Caco-2 (cell line): ENCODE measurements at regions of chr10 and their contacts with region 1.

Region 1: DNA sequence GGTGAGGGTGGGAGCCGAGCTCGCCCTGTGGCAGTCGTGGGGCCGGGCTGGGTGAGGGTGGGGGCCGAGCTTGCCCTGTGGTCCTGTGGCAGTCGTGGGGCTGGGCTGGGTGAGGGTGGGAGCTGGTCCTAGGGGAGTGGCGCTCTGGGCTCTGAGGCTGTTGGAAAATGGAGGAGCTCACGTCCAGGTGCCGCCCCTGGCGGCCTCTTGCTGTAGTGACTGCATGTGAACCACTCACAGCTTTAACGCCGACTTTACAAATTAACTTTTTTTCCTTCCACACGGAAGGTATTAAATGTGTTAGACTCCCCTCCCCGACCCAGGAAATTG is 312.6 kb downstream of the WDR37 start:
- DNase-seq: peak in 1 of 2 experiments; percentile 58
- H3K4me3 ChIP-seq: no peak overlapping the region
- H3K4me3 Mint-ChIP-seq: no peak overlapping the region
- H3K27ac Mint-ChIP-seq: no peak overlapping the region
- H3K4me1 ChIP-seq: no peaks in the 10 kb centered on the region
- H3K4me1 Mint-ChIP-seq: no peaks in the 10 kb centered on the region
- H3K27me3 ChIP-seq: no peaks in the 10 kb centered on the region
- H3K27me3 Mint-ChIP-seq: peaks cover 4% of the 10 kb centered on the region
- CTCF ChIP-seq: peak; percentile 63 to 67

Region 2: DNA sequence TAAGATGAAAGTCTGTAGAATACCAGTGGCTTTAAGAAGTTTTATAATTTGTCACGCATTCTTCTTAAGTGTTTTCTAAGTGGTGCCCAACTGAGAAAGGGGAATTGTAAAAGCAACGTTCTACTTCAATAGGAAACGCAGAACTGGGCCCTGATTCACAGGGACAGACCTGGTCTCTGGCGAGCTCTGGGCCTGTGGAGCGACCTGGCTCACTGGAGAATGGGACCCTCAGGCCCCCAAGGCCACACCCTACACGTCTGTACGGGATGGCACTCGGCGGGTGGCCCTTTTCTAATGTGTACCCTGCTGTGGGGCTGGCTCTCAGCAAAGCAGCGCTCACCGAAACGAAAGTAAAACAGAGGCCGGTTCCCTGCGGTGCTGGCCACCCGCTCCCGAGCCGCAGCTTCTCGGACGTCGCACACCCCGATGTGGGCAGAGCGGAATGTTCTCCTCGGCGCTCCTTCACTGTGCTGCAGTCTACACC is 884.3 kb before region 1 on chr10:
- CTCF ChIA-PET with region 1: no interaction called
- POLR2A ChIA-PET with region 1: no interaction called
- intact Hi-C with region 1: no loop called
- DNase-seq: no peak
- H3K4me3 ChIP-seq: no peak overlapping the region
- H3K4me3 Mint-ChIP-seq: no peak overlapping the region
- H3K27ac Mint-ChIP-seq: no peak overlapping the region
- H3K4me1 ChIP-seq: no peaks in the 10 kb centered on the region
- H3K4me1 Mint-ChIP-seq: no peaks in the 10 kb centered on the region
- H3K27me3 ChIP-seq: no peaks in the 10 kb centered on the region
- H3K27me3 Mint-ChIP-seq: no peaks in the 10 kb centered on the region
- CTCF ChIP-seq: no peak

Region 3: DNA sequence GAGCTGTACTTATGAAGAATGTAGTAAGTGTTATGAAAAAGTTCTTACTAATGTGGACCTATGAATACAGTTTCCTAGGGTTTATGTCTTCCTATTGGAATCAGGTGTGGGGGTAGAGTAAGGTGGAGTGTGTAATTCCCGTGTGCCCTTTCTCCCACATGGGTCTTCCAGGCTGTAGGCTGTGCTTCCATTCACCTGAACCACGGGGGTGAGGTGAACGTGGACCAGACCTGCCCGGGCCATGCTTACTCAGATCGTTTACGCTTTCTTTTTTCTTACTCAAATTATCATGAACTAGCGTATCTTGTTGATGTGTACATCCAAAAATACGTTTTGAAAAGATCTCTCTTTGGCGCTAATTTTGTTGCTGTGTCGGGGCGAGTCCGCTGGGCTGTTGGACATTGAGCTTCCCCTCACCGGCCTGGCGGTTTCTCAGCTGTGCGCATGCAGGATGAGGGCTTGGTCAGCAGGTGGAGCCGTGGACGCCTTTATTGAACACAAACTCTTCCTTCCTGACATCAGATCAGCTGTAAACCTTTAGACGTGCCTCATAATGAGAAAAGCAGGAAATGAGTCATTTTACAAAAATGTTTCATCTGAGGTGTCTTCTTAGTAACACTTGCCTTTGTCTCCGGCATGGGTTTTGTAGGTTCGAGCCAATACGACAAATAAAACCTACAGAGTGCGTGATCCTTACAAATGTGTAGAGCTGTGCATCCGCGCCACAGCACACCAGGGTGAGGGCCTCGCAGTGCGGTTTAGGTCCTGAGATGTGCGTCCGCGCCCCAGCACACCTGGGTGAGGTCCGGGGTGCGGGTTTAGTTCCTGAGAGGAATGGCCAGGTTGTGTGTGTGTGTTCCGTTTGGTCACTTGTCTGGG is 258.8 kb before region 1 on chr10:
- CTCF ChIA-PET with region 1: interaction called, 18 read pairs
- POLR2A ChIA-PET with region 1: no interaction called
- intact Hi-C with region 1: no loop called
- DNase-seq: peak; percentile 77 to 83
- H3K4me3 ChIP-seq: no peak overlapping the region
- H3K4me3 Mint-ChIP-seq: no peak overlapping the region
- H3K27ac Mint-ChIP-seq: peak overlapping the region; percentile 67
- H3K4me1 ChIP-seq: no peaks in the 10 kb centered on the region
- H3K4me1 Mint-ChIP-seq: peaks cover 19% of the 10 kb centered on the region
- H3K27me3 ChIP-seq: no peaks in the 10 kb centered on the region
- H3K27me3 Mint-ChIP-seq: no peaks in the 10 kb centered on the region
- CTCF ChIP-seq: peak; percentile 84 to 85

Region 4: GRCh38 chr10:1142596-1142995 is 226.2 kb before region 1 on chr10:
- CTCF ChIA-PET with region 1: no interaction called
- POLR2A ChIA-PET with region 1: no interaction called
- intact Hi-C with region 1: loop called (anchors 5 kb)
- DNase-seq: peak in 1 of 2 experiments; percentile 45
- H3K4me3 ChIP-seq: no peak overlapping the region
- H3K4me3 Mint-ChIP-seq: no peak overlapping the region
- H3K27ac Mint-ChIP-seq: no peak overlapping the region
- H3K4me1 ChIP-seq: no peaks in the 10 kb centered on the region
- H3K4me1 Mint-ChIP-seq: no peaks in the 10 kb centered on the region
- H3K27me3 ChIP-seq: no peaks in the 10 kb centered on the region
- H3K27me3 Mint-ChIP-seq: peaks cover 18% of the 10 kb centered on the region
- CTCF ChIP-seq: peak; percentile 52 to 66

Region 5: DNA sequence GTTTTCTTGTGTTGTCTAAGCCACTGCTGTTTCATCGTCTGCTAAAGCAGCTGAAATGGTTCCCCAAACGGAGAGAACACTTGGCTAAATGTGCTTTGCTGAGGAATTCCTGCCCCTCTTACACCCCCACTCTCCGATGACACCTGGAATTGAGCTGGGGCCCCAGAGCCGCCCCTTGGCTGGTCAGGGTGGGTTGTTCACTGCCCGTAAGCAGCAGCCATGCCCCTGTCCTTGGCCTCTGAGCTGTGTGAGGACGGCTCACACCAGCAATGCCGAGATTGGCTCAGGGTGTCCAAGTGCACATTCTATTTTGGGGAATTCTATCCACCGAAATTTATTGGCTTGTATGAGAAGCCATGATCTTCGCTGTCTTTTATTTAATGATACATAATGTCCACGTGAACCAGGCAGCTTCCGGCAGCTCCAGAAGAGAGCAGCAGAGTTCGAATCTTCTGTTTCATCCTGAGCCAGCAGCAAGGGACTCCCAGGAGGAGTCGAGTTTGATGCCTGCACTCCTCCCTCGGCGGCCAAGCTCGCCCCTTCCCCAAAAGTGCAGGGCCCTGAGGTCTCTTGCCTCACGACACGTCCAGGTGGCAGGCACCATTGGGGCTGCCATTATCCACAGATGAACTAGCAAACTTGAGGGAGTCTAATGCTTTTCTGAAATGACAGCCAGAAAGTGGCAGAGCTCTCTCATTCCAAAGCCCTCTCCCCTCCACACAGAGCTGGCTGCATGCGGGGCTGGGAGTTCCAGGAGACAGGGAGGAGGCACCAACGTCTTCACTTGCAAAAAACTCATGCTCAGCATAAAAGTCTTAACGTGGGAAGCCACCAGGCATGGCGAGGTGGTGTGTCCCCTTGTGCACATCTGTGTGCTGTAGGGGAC is 198.6 kb before region 1 on chr10:
- CTCF ChIA-PET with region 1: interaction called, 10 read pairs
- POLR2A ChIA-PET with region 1: no interaction called
- intact Hi-C with region 1: loop called (anchors 5 kb)
- DNase-seq: peak in 1 of 2 experiments; percentile 32
- H3K4me3 ChIP-seq: no peak overlapping the region
- H3K4me3 Mint-ChIP-seq: no peak overlapping the region
- H3K27ac Mint-ChIP-seq: no peak overlapping the region
- H3K4me1 ChIP-seq: no peaks in the 10 kb centered on the region
- H3K4me1 Mint-ChIP-seq: no peaks in the 10 kb centered on the region
- H3K27me3 ChIP-seq: peaks cover 2% of the 10 kb centered on the region; the same call in 1 of the 2 replicates
- H3K27me3 Mint-ChIP-seq: peaks cover 16% of the 10 kb centered on the region
- CTCF ChIP-seq: no peak

Region 6: DNA sequence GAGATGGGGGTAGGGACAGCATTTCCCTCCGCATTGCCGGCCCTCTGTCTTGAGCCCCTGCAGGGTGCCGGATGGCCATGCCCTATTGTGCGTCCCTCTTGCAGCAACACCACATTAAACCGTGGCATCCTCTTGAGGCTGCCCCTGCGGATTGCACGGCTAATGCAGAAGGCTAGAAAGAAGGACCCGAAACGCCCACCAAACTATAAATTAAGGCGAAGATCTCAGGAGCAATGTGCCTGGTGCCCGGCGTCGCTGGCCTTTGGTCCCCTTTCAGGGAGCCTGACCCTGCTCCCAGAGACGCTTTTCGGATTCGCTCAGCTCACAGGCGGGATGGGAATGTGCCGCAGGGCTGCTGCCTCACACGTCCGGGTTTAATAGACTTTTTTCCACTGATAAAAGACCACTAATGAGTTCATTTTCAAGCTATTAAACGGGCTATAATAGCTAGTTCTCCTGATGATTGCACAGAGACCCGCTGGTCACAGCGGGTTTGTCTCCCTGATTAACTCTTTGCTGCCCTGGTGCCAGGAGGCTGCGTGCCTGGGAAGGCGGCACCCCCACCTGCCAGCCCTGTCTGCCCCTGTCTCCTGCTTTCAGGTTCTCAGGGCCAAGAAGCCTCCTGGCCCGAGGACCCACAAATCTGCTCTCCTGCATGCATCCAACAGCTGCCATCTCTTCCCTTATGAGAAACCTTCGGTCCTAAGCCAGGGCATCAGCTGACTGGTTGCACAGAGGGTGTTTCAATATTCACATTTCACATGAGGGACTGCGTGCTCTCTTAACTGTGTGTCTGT is 240.2 kb after region 1 on chr10:
- CTCF ChIA-PET with region 1: no interaction called
- POLR2A ChIA-PET with region 1: no interaction called
- intact Hi-C with region 1: no loop called
- DNase-seq: no peak
- H3K4me3 ChIP-seq: no peak overlapping the region
- H3K4me3 Mint-ChIP-seq: no peak overlapping the region
- H3K27ac Mint-ChIP-seq: no peak overlapping the region
- H3K4me1 ChIP-seq: no peaks in the 10 kb centered on the region
- H3K4me1 Mint-ChIP-seq: no peaks in the 10 kb centered on the region
- H3K27me3 ChIP-seq: peaks cover 2% of the 10 kb centered on the region
- H3K27me3 Mint-ChIP-seq: peaks cover 49% of the 10 kb centered on the region
- CTCF ChIP-seq: no peak